CD4-positive, alpha-beta memory T cell (primary cell): ENCODE measurements at regions of chr1 and their contacts with region 1.

Region 1: GRCh38 chr1:93078986-93079654 is at the start of gene MTF2:
- DNase-seq: peak; percentile 89 to 91 (median 90)
- H3K4me3 ChIP-seq: peak within 1 kb of the TSS; percentile 97
- H3K4me3 Mint-ChIP-seq: peak within 1 kb of the TSS; percentile 92 to 99 (median 98)
- H3K27ac ChIP-seq: peak within 1 kb of the TSS; percentile 96
- H3K27ac Mint-ChIP-seq: peak within 1 kb of the TSS; percentile 94 to 100 (median 95)
- H3K4me1 ChIP-seq: peaks cover 46% of the 10 kb centered on the region
- H3K4me1 Mint-ChIP-seq: peaks cover 21 to 58% (median 37%) of the 10 kb centered on the region in 4 donors
- H3K27me3 ChIP-seq: no peaks in the 10 kb centered on the region
- H3K27me3 Mint-ChIP-seq: no peaks in the 10 kb centered on the region
- total RNA-seq, gene MTF2: 46.5 to 47.4 TPM

Region 2: DNA sequence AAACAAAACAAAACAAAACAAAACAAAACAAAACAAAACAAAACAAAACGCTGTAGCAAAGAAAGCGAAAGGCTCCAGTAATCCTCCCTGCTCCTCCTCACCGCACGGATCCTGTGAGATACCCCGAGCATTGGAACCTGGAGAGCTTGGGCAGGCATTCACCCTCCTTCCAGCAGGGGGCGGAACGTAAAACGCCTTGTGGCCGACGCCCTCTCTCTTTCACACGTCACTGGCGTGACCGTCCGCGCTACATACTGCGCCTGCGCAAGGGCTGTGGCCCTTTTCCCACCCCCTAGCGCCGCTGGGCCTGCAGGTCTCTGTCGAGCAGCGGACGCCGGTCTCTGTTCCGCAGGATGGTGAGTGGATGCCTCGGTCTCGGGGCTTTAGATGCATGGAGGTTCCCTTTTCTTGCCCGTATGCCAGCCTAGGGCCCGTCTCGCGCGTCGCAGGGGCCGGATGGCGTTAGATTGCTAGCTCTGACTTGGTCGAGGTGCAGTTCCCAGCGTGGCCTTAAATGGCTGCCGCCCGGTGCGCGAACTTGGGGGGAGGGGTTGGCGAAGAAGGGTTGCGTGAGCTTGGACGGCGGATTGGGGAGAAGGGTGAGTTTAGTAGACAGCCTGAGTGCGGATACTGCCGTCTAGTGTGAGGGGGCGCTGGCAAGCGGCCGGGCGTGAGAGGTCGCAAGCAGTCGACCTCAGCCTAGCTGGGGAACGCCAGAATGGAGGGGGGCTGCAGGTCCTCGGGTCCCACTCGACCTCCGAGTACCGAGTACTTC is 247.2 kb before region 1 on chr1 and contains the start of gene RPL5:
- CTCF ChIA-PET with region 1: interaction called, 9 read pairs
- POLR2A ChIA-PET with region 1: interaction called, 22 read pairs
- intact Hi-C with region 1: no loop called
- DNase-seq: peak; percentile 97 to 100 (median 98)
- H3K4me3 ChIP-seq: peak within 1 kb of the TSS; percentile 54 to 100
- H3K4me3 Mint-ChIP-seq: peak within 1 kb of the TSS; percentile 98 to 100 (median 100)
- H3K27ac ChIP-seq: peak within 1 kb of the TSS; percentile 93
- H3K27ac Mint-ChIP-seq: peak within 1 kb of the TSS; percentile 98 to 100 (median 99)
- H3K4me1 ChIP-seq: peaks cover 46% of the 10 kb centered on the region
- H3K4me1 Mint-ChIP-seq: peaks cover 35 to 55% (median 45%) of the 10 kb centered on the region in 4 donors
- H3K27me3 ChIP-seq: no peaks in the 10 kb centered on the region
- H3K27me3 Mint-ChIP-seq: peaks cover 0 to 1% of the 10 kb centered on the region in 2 donors
- total RNA-seq, gene RPL5: 1,501 to 1,588 TPM

Region 3: DNA sequence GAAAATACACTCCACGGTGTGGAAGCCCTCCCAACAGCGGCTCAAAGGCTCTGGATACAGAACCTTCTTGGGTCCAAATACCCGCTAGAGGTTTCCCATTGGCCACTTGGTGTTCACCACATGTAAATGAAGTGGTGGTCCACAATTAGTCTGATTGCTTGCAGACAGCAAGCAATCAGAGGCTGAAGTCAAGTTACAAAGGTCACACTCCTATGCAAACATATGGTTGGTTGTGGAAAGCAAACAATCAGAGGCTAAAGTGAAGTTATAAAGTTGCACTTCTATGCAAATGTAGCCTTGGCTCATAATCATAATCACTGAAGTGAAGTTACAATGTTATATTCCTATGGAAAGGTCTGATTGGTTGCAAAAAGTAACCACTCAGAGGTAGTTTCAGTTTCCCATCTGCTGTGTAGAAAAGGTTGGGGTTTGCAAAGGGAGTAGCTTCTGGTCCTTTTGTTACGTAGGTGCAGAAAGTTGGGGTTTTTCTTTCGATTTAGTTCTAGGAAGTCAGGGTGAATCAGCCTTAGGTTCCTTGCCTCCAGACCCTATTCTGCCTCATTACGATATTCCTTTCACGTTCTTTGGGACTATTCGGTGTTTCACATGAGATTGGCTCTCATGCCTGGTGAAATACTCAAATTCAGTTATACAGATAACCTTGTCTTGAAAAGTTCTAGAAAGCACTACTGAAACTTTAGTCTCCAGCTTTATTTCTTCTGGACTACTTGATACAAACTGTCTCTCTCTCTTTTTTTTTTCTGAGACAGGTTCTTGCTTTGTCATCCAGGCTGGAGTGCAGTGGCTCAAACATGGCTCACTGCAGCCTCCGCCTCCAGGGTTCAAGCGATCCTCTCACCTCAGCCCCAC is 36.7 kb before region 1 on chr1:
- CTCF ChIA-PET with region 1: interaction called, 8 read pairs
- POLR2A ChIA-PET with region 1: interaction called, 53 read pairs
- intact Hi-C with region 1: loop called (anchors 1 kb)
- DNase-seq: peak; percentile 68 to 86 (median 80)
- H3K4me3 ChIP-seq: peak overlapping the region; percentile 3 to 49
- H3K4me3 Mint-ChIP-seq: peak overlapping the region; percentile 69 to 93 (median 87)
- H3K27ac ChIP-seq: peak overlapping the region; percentile 76
- H3K27ac Mint-ChIP-seq: peak overlapping the region; percentile 80 to 98 (median 97)
- H3K4me1 ChIP-seq: peaks cover 13% of the 10 kb centered on the region
- H3K4me1 Mint-ChIP-seq: peaks cover 4 to 18% (median 10%) of the 10 kb centered on the region in 4 donors
- H3K27me3 ChIP-seq: no peaks in the 10 kb centered on the region
- H3K27me3 Mint-ChIP-seq: no peaks in the 10 kb centered on the region

Region 4: GRCh38 chr1:93114391-93114790 is 35.3 kb after region 1 on chr1:
- CTCF ChIA-PET with region 1: interaction called, 3 read pairs
- POLR2A ChIA-PET with region 1: interaction called, 5 read pairs
- intact Hi-C with region 1: loop called (anchors 5 kb)
- DNase-seq: no peak
- H3K4me3 ChIP-seq: no peak overlapping the region
- H3K4me3 Mint-ChIP-seq: no peak overlapping the region
- H3K27ac ChIP-seq: no peak overlapping the region
- H3K27ac Mint-ChIP-seq: no peak overlapping the region
- H3K4me1 ChIP-seq: peaks cover 12% of the 10 kb centered on the region
- H3K4me1 Mint-ChIP-seq: peaks cover 6 to 24% (median 16%) of the 10 kb centered on the region in 4 donors
- H3K27me3 ChIP-seq: no peaks in the 10 kb centered on the region
- H3K27me3 Mint-ChIP-seq: no peaks in the 10 kb centered on the region

Region 5: GRCh38 chr1:93235271-93235670 is 156.2 kb after region 1 on chr1:
- CTCF ChIA-PET with region 1: no interaction called
- POLR2A ChIA-PET with region 1: no interaction called
- intact Hi-C with region 1: no loop called
- DNase-seq: no peak
- H3K4me3 ChIP-seq: no peak overlapping the region
- H3K4me3 Mint-ChIP-seq: no peak overlapping the region
- H3K27ac ChIP-seq: no peak overlapping the region
- H3K27ac Mint-ChIP-seq: peak overlapping the region in 1 of 7 donors; percentile 33
- H3K4me1 ChIP-seq: no peaks in the 10 kb centered on the region
- H3K4me1 Mint-ChIP-seq: no peaks in the 10 kb centered on the region
- H3K27me3 ChIP-seq: no peaks in the 10 kb centered on the region
- H3K27me3 Mint-ChIP-seq: no peaks in the 10 kb centered on the region

Region 6: GRCh38 chr1:93345633-93346420 is 266.7 kb after region 1 on chr1 and contains the start of gene DR1:
- CTCF ChIA-PET with region 1: interaction called, 3 read pairs
- POLR2A ChIA-PET with region 1: interaction called, 33 read pairs
- intact Hi-C with region 1: loop called (anchors 1 kb)
- DNase-seq: peak; percentile 87 to 92 (median 89)
- H3K4me3 ChIP-seq: peak within 1 kb of the TSS; percentile 80 to 100
- H3K4me3 Mint-ChIP-seq: peak within 1 kb of the TSS; percentile 96 to 99 (median 98)
- H3K27ac ChIP-seq: peak within 1 kb of the TSS; percentile 91
- H3K27ac Mint-ChIP-seq: peak within 1 kb of the TSS; percentile 95 to 99 (median 98)
- H3K4me1 ChIP-seq: peaks cover 46% of the 10 kb centered on the region
- H3K4me1 Mint-ChIP-seq: peaks cover 23 to 59% (median 30%) of the 10 kb centered on the region in 4 donors
- H3K27me3 ChIP-seq: no peaks in the 10 kb centered on the region
- H3K27me3 Mint-ChIP-seq: no peaks in the 10 kb centered on the region
- total RNA-seq, gene DR1: 71.8 to 71.9 TPM

Region 7: GRCh38 chr1:93629099-93630059 is 550.3 kb after region 1 on chr1:
- CTCF ChIA-PET with region 1: interaction called, 4 read pairs
- POLR2A ChIA-PET with region 1: no interaction called
- intact Hi-C with region 1: loop called (anchors 5 kb)
- DNase-seq: peak in 4 of 5 donors; percentile 62 to 69 (median 63)
- H3K4me3 ChIP-seq: no peak overlapping the region
- H3K4me3 Mint-ChIP-seq: no peak overlapping the region
- H3K27ac ChIP-seq: no peak overlapping the region
- H3K27ac Mint-ChIP-seq: peak overlapping the region in 2 of 7 donors; percentile 46 to 55
- H3K4me1 ChIP-seq: no peaks in the 10 kb centered on the region
- H3K4me1 Mint-ChIP-seq: no peaks in the 10 kb centered on the region
- H3K27me3 ChIP-seq: no peaks in the 10 kb centered on the region
- H3K27me3 Mint-ChIP-seq: no peaks in the 10 kb centered on the region

Region 8: GRCh38 chr1:93814059-93814794 is 735.1 kb after region 1 on chr1:
- CTCF ChIA-PET with region 1: no interaction called
- POLR2A ChIA-PET with region 1: no interaction called
- intact Hi-C with region 1: no loop called
- DNase-seq: peak in 4 of 5 donors; percentile 33 to 51 (median 38)
- H3K4me3 ChIP-seq: no peak overlapping the region
- H3K4me3 Mint-ChIP-seq: no peak overlapping the region
- H3K27ac ChIP-seq: no peak overlapping the region
- H3K27ac Mint-ChIP-seq: no peak overlapping the region
- H3K4me1 ChIP-seq: peaks cover 20% of the 10 kb centered on the region
- H3K4me1 Mint-ChIP-seq: peaks cover 13 to 23% (median 17%) of the 10 kb centered on the region in 4 donors
- H3K27me3 ChIP-seq: no peaks in the 10 kb centered on the region
- H3K27me3 Mint-ChIP-seq: no peaks in the 10 kb centered on the region